Posterior cingulate gyrus (tissue), 11 donors: ENCODE measurements at regions of chrX and their contacts with region 1.

Region 1: DNA sequence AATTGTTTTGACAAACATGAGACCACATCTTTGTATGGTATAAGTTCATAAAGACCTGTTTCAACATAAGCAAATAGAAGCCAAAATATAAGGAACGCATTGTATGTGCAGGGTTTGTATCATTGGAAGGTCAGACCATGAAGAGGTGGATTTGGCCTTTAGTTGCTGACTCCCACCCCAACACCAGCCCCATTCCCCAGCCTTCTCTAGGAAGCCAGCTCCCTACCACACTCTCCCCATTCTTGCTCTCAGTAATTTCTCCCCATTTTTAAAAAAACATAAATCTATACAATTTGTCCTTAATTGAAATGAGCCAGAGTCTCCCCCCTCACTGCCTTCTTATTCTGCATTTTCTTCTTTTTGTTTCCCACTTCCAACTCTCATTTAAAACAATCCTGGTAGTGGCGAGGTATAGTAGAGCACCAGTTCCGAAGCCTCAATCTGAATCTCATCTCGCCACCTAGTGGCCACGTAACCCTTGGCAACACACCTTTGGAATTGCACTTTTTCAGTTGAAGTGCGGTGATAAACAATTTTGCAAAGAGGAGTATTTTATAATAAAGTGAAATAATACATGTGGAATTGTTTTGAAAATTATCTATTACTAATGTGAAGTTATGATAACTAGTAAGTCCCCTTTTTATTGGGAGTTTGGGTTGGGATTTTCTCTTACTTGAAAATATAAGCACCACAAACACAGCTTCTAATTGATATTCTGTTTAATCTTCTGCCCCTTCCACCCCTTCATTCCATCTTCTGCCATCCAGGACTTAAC is 126.6 kb downstream of the ASB9 start:
- DNase-seq: peak in 8 of 10 donors; percentile 12 to 89 (median 40)

Region 2: GRCh38 chrX:14039344-14039743 is 1103.9 kb before region 1 on chrX:
- intact Hi-C with region 1: loop called (anchors 2 kb)
- DNase-seq: peak in 5 of 10 donors; percentile 14 to 49 (median 26)

Region 3: GRCh38 chrX:14095702-14096101 is 1047.5 kb before region 1 on chrX:
- intact Hi-C with region 1: loop called (anchors 2 kb)
- DNase-seq: peak in 7 of 10 donors; percentile 9 to 73 (median 32)

Region 4: GRCh38 chrX:14528629-14529289 is 614.5 kb before region 1 on chrX:
- intact Hi-C with region 1: loop called (anchors 10 kb)
- DNase-seq: peak; percentile 43 to 93 (median 70)